ENCODE measurements at regions of chr5 and their contacts with region 1.

Region 1: DNA sequence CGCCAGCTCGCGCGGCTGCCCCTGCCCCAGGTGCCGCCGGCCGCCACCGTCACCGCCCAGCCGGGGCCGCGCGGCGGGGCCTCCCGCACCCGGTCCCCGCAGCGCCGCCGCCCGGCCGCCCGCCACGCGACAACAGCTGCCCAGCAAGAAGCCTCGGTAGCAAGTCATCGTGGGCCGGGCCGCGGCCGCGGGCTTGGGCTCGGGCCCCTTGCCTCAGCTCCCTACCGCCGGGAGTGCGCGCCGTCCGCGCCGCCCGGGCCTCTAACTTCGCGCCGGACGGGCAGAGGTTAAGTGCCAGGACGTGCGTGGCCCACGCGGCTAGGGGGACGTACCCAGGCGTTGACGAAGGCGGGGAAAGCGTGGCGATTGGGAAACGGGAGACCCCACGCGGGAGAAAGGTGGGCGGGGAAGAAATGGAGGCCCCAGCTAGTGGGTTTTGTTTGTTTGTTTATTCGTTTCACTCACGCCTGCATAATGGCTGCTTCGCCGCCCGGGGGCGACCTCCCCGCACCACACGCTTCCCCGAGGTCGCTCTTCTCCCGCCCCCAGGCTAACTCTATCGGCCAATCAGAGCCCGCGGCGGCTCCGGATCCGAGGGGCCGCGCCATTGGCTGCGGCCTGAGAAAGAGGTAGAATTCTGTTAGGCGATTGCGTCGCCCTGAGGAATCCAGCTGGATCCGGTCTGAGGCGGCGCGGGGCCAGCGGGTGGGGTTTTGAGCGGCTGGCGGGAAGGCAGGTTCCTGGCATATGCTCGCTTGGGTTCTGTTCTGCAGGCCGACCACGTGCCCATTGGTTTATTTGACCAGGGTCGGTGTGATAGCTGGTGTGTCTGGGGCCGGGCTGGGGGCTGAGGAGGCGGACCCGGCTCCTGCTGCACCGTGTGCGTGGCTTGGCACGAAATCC is at the start of gene NADK2:
- H3K4me3 ChIP-seq: peak within 1 kb of the TSS; percentile 89
- H3K27ac ChIP-seq: peak within 1 kb of the TSS; percentile 95
- H3K4me1 ChIP-seq: peaks cover 41% of the 10 kb centered on the region
- CTCF ChIP-seq: peak; percentile 99

Region 2: GRCh38 chr5:36151434-36152323 is 90.2 kb before region 1 on chr5 and contains the starts of genes LMBRD2 and SKP2:
- CTCF ChIA-PET with region 1: interaction called, 4 read pairs
- POLR2A ChIA-PET with region 1: interaction called, 18 read pairs
- H3K4me3 ChIP-seq: peak within 1 kb of the TSS; percentile 90
- H3K27ac ChIP-seq: peak within 1 kb of the TSS; percentile 74
- H3K4me1 ChIP-seq: peaks cover 11% of the 10 kb centered on the region
- CTCF ChIP-seq: peak; percentile 44; the same call in 1 of the 2 replicates

Region 3: DNA sequence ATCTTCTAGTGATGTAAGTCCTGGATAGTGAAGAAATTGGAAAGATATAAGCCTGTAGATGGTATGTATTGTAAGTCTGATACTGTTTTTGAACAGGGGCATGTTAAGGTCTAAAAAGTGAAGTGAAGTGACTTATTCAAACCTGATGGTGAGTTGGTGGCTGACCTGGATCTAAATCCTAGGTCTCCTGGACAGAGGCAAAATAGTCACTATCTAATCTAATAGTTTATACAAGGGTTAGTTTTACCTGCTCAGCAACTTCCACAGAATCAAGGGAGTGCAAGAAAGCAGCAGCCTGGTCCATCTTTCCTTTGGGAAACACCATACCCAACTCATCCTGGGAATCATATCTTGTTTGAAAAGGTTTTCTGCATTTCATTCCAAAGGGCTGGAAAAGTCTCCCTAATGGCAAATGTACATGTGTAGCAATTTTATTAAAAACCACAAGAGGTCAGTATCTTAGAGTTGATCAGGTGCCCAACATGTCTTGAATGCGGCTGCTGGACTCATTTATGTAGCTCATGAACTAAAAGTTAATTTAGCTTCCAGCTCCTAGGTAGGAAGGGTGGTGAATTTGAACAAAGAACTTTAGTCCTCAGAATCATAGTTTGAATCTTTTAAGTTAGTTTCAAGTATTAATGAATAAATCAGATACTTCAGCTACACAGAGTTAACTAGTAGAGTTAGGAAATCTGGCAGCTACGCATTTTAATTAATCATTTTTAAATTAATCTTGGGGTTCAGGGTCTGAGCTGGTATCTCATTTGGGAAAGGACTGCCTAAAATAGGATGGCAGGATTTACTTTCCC is 64.0 kb before region 1 on chr5:
- CTCF ChIA-PET with region 1: interaction called, 14 read pairs
- POLR2A ChIA-PET with region 1: no interaction called
- H3K4me3 ChIP-seq: no peak overlapping the region
- H3K27ac ChIP-seq: no peak overlapping the region
- H3K4me1 ChIP-seq: no peaks in the 10 kb centered on the region
- CTCF ChIP-seq: peak; percentile 39; the same call in 1 of the 2 replicates

Region 4: DNA sequence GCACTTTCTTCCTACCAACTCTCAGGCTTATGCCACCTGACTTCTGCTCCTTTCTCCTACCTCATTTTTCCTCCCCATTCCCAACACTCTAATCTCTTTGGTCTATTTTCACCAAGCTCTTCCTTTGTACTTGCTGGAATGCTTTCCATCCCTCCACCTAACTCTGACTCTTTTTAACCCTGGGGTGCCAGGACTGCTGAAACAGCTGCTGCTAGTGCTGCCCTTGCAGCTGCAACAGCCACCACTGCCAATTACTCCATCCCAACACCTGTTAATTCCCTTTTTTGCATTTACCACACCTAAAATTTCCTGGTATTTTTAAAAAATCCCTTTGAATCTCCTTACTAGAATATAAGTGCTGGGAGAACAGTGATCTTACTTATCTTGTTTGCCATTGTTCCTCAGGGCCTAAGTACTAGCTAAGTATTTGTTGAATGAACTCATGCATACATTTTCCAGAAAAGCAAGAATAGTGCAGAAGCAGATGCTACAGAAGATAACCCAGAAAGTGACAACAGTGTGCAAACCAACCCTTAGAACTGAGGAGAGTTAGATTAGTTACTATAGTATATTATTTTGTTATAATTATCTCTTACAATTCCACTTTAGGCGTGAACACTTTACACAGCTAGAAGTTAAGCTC is 11.6 kb before region 1 on chr5:
- CTCF ChIA-PET with region 1: interaction called, 13 read pairs
- POLR2A ChIA-PET with region 1: interaction called, 8 read pairs
- H3K4me3 ChIP-seq: no peak overlapping the region
- H3K27ac ChIP-seq: no peak overlapping the region
- H3K4me1 ChIP-seq: no peaks in the 10 kb centered on the region
- CTCF ChIP-seq: no peak

Region 5: DNA sequence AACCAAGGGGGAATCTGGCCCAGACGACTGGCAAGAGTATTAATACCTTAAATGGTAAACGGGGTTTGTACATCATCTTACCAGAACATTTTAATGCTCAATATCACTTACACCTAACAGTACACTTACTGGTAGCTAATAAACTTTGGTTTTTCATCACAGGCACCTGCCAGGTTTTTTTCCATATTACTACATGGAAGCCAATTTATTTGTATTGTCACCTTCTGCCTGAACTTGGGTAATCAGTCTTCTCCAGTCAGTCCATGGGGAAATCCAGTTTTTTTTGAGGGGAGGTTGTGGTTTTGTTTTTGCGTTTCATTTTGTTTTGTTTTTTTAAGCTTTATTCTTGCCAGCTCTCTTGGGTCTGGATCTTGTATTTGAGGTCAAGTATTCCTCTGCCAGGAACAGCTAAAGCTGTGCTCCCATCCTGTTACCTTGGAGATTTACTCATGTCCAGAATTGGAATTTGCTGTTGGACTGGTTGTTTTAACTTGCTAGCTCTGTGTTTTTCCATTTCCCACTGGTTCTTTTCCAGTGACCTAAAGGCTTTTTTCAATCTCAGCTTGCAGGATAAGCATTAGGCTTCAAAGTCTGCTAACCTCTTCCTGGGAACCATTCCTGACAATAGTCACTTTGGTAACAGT is 11.0 kb after region 1 on chr5:
- CTCF ChIA-PET with region 1: interaction called, 14 read pairs
- POLR2A ChIA-PET with region 1: interaction called, 8 read pairs
- H3K4me3 ChIP-seq: no peak overlapping the region
- H3K27ac ChIP-seq: no peak overlapping the region
- H3K4me1 ChIP-seq: 0 out of 2 replicates have a peak, but pooled peaks cover 6% of the 10 kb centered on the region
- CTCF ChIP-seq: no peak

Region 6: GRCh38 chr5:36397901-36398536 is 156.1 kb after region 1 on chr5:
- CTCF ChIA-PET with region 1: interaction called, 11 read pairs
- POLR2A ChIA-PET with region 1: interaction called, 3 read pairs
- H3K4me3 ChIP-seq: no peak overlapping the region
- H3K27ac ChIP-seq: no peak overlapping the region
- H3K4me1 ChIP-seq: peaks cover 18% of the 10 kb centered on the region
- CTCF ChIP-seq: peak; percentile 72